CD14-positive monocyte (primary cell): ENCODE measurements at regions of chr4 and their contacts with region 1.

Region 1: DNA sequence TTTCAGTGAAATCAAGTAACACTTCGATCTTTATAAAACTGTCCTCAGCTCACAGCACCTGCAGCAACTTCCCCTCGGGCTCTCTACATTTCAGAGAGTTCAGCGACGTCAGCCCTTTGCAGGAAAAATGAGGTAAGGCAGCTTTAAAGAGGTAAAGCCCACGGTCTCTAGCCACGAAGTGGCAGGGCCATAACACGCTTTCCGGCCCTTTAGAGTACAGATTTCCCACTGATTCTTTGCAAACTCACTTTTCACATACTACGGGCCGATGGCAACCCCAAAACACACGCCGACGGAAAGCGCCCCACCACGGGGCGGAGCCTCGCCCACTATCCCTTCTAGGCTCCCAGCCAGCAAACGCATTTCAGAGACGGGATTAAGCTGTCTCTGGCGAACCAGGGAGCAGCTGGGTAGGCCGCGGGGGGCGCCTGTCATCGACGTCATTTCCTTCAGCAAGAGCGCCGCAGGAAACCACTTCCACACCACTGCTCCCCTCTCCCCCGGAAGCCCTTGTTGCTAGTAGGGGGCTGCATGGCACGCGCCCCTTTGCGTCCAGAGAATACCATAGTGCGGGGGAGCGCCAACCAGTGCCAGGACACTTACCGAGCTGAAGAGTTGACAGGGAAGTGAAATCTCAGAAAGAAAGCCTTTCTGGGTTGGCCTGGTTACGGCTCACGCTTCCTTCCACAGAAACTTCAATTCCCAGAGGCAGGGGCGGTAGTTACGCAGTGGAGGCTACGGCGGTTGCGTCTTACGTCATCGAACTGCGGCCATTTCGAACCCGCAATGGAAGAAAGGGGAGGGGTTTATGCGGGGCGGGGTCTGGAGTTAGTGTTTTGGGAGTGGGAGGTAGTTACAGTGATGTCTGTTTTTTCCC is at the start of gene TRMT10A:
- DNase-seq: peak; percentile 94 to 97 (median 95)
- H3K4me3 ChIP-seq: peak within 1 kb of the TSS; percentile 51 to 90 (median 87)
- H3K4me3 Mint-ChIP-seq: peak within 1 kb of the TSS; percentile 90 to 98
- H3K27ac ChIP-seq: peak within 1 kb of the TSS; percentile 87 to 90
- H3K27ac Mint-ChIP-seq: peak within 1 kb of the TSS; percentile 98 to 100 (median 99)
- H3K4me1 ChIP-seq: peaks cover 8 to 9% of the 10 kb centered on the region in 2 donors
- H3K4me1 Mint-ChIP-seq: peaks cover 6% of the 10 kb centered on the region
- H3K27me3 ChIP-seq: peaks cover 5 to 17% of the 10 kb centered on the region in 2 donors
- H3K27me3 Mint-ChIP-seq: peaks cover 6 to 9% (median 7%) of the 10 kb centered on the region in 3 donors
- CTCF ChIP-seq: no peak
- polyA plus RNA-seq, gene TRMT10A: 1.6 to 3.9 (median 3.4) TPM

Region 2: GRCh38 chr4:98148856-98149255 is 1414.7 kb before region 1 on chr4:
- intact Hi-C with region 1: loop called in 1 of 2 experiments (anchors 5 kb)
- DNase-seq: no peak
- H3K4me3 ChIP-seq: no peak overlapping the region
- H3K4me3 Mint-ChIP-seq: no peak overlapping the region
- H3K27ac ChIP-seq: no peak overlapping the region
- H3K27ac Mint-ChIP-seq: no peak overlapping the region
- H3K4me1 ChIP-seq: peaks cover 0 to 3% of the 10 kb centered on the region in 2 donors
- H3K4me1 Mint-ChIP-seq: peaks cover 10% of the 10 kb centered on the region
- H3K27me3 ChIP-seq: peaks cover 0 to 2% of the 10 kb centered on the region in 2 donors
- H3K27me3 Mint-ChIP-seq: peaks cover 0 to 8% (median 3%) of the 10 kb centered on the region in 3 donors
- CTCF ChIP-seq: no peak

Region 3: GRCh38 chr4:99574530-99575324 is 11.2 kb after region 1 on chr4 and contains the start of gene MTTP:
- intact Hi-C with region 1: no loop called
- DNase-seq: no peak
- H3K4me3 ChIP-seq: no peak within 1 kb of the TSS
- H3K4me3 Mint-ChIP-seq: peak within 1 kb of the TSS in 1 of 2 donors; percentile 17
- H3K27ac ChIP-seq: no peak within 1 kb of the TSS
- H3K27ac Mint-ChIP-seq: peak within 1 kb of the TSS in 3 of 7 donors; percentile 0 to 15 (median 1)
- H3K4me1 ChIP-seq: peaks cover 0 to 4% of the 10 kb centered on the region in 2 donors
- H3K4me1 Mint-ChIP-seq: peaks cover 6% of the 10 kb centered on the region
- H3K27me3 ChIP-seq: peaks cover 6 to 19% of the 10 kb centered on the region in 2 donors
- H3K27me3 Mint-ChIP-seq: peaks cover 12 to 15% (median 12%) of the 10 kb centered on the region in 3 donors
- CTCF ChIP-seq: no peak
- polyA plus RNA-seq, gene MTTP: not detected

Region 4: DNA sequence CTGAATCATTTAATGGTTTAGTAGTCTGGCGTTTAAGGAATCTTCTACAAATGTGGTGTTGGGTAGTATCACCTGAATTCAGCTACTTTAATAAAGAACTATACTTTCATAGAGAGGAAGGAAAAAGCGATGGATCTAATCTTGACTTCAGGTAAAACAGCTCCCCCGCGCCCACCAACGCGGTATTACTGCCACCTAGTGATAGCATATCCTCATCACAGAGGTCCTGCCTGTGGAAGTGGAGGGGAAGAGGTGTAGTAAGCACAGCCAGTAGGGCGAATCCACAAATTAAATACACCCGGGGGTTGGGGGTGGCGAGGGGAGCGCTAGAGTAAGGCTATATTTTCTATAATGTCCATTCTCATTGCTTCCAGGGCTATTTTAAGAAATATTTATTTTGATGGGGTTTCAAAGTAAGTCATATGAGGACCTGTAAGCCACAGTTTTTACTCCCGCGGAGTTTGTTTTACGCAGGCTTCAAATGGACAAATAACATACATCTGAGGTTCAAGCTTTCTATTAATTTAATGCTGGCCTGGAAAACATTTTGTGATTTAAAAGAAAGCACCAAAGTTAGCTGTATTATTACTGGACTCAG is 244.8 kb after region 1 on chr4:
- intact Hi-C with region 1: loop called in 1 of 2 experiments (anchors 5 kb)
- DNase-seq: peak; percentile 34 to 58 (median 47)
- H3K4me3 ChIP-seq: no peak overlapping the region
- H3K4me3 Mint-ChIP-seq: no peak overlapping the region
- H3K27ac ChIP-seq: no peak overlapping the region
- H3K27ac Mint-ChIP-seq: no peak overlapping the region
- H3K4me1 ChIP-seq: peaks cover 5 to 6% of the 10 kb centered on the region in 2 donors
- H3K4me1 Mint-ChIP-seq: peaks cover 10% of the 10 kb centered on the region
- H3K27me3 ChIP-seq: peaks cover 0 to 2% of the 10 kb centered on the region in 2 donors
- H3K27me3 Mint-ChIP-seq: peaks cover 0 to 5% (median 5%) of the 10 kb centered on the region in 3 donors
- CTCF ChIP-seq: peak; percentile 75

Region 5: DNA sequence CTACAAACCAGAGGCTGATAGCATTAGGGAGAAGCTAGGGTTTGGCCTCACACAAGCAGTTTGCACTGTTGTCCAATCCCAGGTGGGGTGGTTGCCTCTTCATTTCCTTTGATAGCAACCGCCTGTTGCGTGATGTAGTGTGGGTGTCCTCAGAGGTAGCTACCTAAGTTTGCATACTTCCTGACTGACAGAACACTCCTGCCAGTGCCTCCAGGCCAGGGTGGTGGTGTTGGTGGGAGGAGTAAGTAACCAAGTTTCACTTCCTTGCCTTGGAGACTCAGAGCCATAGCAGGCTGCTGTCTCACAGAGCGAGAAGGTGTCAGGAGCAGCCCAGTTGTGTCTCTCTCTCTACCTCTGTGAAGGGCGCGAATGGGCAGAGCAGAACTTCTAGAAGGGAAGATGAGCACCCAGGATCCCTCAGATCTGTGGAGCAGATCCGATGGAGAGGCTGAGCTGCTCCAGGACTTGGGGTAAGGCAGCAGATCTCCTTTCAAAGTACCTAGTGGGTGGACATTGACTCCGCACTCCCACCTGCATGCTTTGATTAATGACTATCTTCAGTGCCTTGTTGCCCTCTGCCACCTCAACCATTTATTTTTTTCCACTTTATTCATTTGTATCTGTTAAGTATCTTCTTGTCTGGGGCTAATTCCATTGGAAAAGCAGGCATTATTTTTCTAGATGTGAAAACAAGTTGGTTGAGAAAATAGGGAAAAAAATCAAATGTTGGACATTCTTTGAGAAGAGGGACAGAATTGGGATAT is 253.2 kb after region 1 on chr4 and contains the start of gene DAPP1:
- intact Hi-C with region 1: loop called in 1 of 2 experiments (anchors 5 kb)
- DNase-seq: peak; percentile 75 to 91 (median 84)
- H3K4me3 ChIP-seq: peak within 1 kb of the TSS; percentile 79 to 99 (median 90)
- H3K4me3 Mint-ChIP-seq: peak within 1 kb of the TSS; percentile 92 to 99
- H3K27ac ChIP-seq: peak within 1 kb of the TSS; percentile 85 to 94
- H3K27ac Mint-ChIP-seq: peak within 1 kb of the TSS; percentile 94 to 99 (median 96)
- H3K4me1 ChIP-seq: peaks cover 66 to 72% of the 10 kb centered on the region in 2 donors
- H3K4me1 Mint-ChIP-seq: peaks cover 66% of the 10 kb centered on the region
- H3K27me3 ChIP-seq: no peaks in the 10 kb centered on the region
- H3K27me3 Mint-ChIP-seq: no peaks in the 10 kb centered on the region
- CTCF ChIP-seq: no peak
- polyA plus RNA-seq, gene DAPP1: 63.1 to 125 (median 87.2) TPM

Region 6: GRCh38 chr4:99894161-99894997 is 330.8 kb after region 1 on chr4 and contains the start of gene LAMTOR3:
- intact Hi-C with region 1: loop called (anchors 5 kb)
- DNase-seq: peak; percentile 95 to 98 (median 96)
- H3K4me3 ChIP-seq: peak within 1 kb of the TSS; percentile 72 to 99 (median 96)
- H3K4me3 Mint-ChIP-seq: peak within 1 kb of the TSS; percentile 91 to 94
- H3K27ac ChIP-seq: peak within 1 kb of the TSS; percentile 97 to 99
- H3K27ac Mint-ChIP-seq: peak within 1 kb of the TSS; percentile 97 to 99 (median 99)
- H3K4me1 ChIP-seq: peaks cover 15 to 23% of the 10 kb centered on the region in 2 donors
- H3K4me1 Mint-ChIP-seq: peaks cover 28% of the 10 kb centered on the region
- H3K27me3 ChIP-seq: no peaks in the 10 kb centered on the region
- H3K27me3 Mint-ChIP-seq: no peaks in the 10 kb centered on the region
- CTCF ChIP-seq: no peak
- polyA plus RNA-seq, gene LAMTOR3: 19.9 to 83.3 (median 62.5) TPM

Region 7: DNA sequence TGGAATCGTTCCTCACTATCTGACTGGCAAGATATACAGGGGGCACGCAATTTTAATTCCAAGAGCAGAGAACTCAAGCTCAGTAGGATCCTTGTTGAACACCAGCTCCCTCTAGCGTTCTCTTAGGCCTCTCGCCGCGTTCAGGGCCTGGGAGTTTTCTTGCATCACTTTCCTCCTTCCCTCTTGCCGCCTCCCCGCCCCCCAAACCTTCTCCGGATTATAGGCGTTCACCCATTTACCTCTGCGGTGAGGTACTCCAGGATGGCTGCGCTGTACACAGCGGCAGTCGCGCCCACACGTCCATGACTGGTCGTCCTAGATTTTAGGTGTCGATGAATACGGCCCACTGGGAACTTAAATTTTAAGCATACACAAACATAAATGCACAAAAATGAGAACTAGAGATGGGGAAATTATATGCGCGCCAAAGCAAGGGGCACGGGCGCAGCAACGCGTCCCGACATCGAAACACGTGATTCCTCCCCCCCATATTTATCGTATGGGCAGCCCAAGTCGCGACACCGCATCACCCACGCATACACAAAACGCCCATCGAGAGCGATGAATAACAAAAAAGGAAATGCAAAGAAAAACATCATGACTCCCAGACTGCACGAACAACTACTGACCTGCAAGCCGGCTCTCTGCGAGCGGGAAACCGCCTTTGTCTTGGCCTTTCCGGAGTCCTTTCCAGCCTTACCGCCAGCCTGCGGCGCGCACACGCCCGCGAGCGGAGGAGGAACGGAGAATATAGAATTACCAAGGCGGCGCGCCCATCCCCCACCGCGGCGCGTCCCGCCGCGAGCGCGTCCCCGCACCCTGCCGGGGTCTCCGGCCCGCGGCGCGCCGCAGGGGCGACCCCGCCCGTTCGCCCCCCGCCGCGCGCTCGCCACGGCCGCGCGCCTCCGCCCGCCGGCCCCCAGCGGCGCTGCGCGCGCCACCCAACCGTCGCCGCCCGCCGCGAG is 385.8 kb after region 1 on chr4:
- intact Hi-C with region 1: loop called (anchors 5 kb)
- DNase-seq: peak; percentile 85 to 93 (median 88)
- H3K4me3 ChIP-seq: peak overlapping the region; percentile 58 to 82 (median 75)
- H3K4me3 Mint-ChIP-seq: no peak overlapping the region
- H3K27ac ChIP-seq: peak overlapping the region; percentile 83 to 86
- H3K27ac Mint-ChIP-seq: no peak overlapping the region
- H3K4me1 ChIP-seq: peaks cover 37 to 53% of the 10 kb centered on the region in 2 donors
- H3K4me1 Mint-ChIP-seq: peaks cover 33% of the 10 kb centered on the region
- H3K27me3 ChIP-seq: no peaks in the 10 kb centered on the region
- H3K27me3 Mint-ChIP-seq: no peaks in the 10 kb centered on the region
- CTCF ChIP-seq: peak; percentile 86